ENCODE measurements at regions of chr6 and their contacts with region 1.

Region 1: DNA sequence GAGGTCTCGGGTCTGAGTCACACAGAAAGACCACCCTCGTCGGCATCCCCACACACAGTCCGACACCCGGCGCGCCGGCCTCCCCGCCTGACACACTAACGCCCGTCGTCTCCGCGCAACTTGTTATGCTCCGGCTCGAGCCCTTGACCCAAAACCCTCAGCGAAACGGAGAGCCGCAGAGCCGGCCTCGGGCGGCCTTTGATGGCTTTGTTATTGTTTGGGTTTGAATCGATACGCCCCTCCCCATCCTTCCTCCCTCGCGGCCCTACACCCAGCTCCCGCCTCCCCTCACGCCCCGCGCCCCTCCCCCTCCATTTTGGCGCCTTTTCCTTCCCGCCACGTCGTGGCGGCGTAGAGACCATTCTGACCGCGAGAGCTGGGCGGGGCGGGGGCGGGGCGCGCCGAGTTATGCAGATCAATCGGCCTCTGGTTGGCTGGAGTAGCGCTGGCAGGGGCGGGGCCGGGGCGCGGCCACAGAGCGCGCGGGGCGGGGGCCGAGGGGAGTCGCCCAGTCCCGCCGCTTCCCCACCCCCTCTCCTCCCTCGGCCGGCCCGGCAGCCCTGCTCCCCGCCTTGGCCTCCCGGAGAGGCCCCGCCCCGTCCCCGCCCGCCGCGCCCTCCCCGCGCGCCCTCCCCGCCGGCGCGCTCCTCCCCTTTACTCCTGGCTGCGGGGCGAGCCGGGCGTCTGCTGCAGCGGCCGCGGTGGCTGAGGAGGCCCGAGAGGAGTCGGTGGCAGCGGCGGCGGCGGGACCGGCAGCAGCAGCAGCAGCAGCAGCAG is at the start of gene PIM1:
- DNase-seq: peak; percentile 99
- H3K4me3 ChIP-seq: peak within 1 kb of the TSS; percentile 54 to 60
- H3K27ac ChIP-seq: peak within 1 kb of the TSS; percentile 84 to 90
- H3K4me1 ChIP-seq: peaks cover 5% of the 10 kb centered on the region
- H3K27me3 ChIP-seq: no peaks in the 10 kb centered on the region
- CTCF ChIP-seq: peak in 1 of 4 experiments; percentile 12
- POLR2A ChIP-seq: peak; percentile 96
- total RNA-seq, gene PIM1: 4.8 to 35.3 TPM

Region 2: GRCh38 chr6:36985808-36986703 is 183.6 kb before region 1 on chr6 and contains the start of gene MTCH1:
- intact Hi-C with region 1: loop called (anchors 5 kb)
- DNase-seq: peak; percentile 85
- H3K4me3 ChIP-seq: peak within 1 kb of the TSS; percentile 99 to 100
- H3K27ac ChIP-seq: peak within 1 kb of the TSS; percentile 97 to 98
- H3K4me1 ChIP-seq: peaks cover 4% of the 10 kb centered on the region
- H3K27me3 ChIP-seq: no peaks in the 10 kb centered on the region
- CTCF ChIP-seq: peak in 1 of 4 experiments; percentile 3
- POLR2A ChIP-seq: peak; percentile 99
- total RNA-seq, gene MTCH1: 269 to 367 TPM

Region 3: DNA sequence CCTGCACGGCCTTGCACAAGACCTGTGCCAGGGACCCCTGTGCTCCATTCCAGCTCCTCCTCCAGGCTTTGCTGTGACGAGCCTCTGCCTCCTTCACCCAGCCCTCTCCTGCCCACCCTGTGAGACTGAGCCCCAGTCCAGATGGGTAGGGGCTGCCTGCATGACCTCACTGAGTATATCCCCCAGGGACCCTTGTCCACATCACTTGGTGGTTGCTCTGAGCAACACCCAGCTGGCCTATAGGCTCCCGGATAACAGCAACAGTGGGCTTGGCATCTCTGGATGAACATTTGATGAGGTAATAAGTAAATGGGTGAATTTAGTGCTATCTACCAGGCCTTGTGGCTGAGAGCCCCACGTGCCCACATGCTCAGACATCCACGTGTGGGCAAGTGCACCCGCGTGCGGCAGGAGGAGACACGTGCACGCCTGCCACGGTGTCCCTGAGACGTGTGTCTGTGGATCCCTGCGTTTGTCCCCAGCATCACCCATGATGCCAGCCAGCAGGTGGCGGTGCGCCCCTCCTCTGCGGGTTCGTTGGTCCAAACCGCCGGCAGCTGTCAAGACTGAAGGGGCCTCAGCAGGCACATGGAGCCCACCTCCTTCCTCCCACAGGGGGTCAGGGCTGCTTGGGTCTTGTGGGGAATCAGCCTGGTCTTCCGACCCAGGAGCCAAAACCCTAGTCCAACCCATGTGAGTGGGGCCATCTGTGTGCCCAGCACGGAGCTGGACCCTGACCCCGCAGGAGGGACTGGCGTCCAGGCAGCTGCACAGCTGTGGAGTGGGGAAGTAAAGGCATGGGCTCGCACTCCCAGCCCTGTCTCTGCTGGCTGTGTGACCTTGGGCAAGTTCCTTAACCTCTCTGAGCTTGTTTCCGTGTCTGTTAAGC is 118.3 kb before region 1 on chr6:
- intact Hi-C with region 1: loop called (anchors 2 kb)
- DNase-seq: peak; percentile 86
- H3K4me3 ChIP-seq: no peak overlapping the region
- H3K27ac ChIP-seq: no peak overlapping the region
- H3K4me1 ChIP-seq: no peaks in the 10 kb centered on the region
- H3K27me3 ChIP-seq: no peaks in the 10 kb centered on the region
- CTCF ChIP-seq: peak; percentile 93 to 98 (median 96)
- POLR2A ChIP-seq: no peak

Region 4: DNA sequence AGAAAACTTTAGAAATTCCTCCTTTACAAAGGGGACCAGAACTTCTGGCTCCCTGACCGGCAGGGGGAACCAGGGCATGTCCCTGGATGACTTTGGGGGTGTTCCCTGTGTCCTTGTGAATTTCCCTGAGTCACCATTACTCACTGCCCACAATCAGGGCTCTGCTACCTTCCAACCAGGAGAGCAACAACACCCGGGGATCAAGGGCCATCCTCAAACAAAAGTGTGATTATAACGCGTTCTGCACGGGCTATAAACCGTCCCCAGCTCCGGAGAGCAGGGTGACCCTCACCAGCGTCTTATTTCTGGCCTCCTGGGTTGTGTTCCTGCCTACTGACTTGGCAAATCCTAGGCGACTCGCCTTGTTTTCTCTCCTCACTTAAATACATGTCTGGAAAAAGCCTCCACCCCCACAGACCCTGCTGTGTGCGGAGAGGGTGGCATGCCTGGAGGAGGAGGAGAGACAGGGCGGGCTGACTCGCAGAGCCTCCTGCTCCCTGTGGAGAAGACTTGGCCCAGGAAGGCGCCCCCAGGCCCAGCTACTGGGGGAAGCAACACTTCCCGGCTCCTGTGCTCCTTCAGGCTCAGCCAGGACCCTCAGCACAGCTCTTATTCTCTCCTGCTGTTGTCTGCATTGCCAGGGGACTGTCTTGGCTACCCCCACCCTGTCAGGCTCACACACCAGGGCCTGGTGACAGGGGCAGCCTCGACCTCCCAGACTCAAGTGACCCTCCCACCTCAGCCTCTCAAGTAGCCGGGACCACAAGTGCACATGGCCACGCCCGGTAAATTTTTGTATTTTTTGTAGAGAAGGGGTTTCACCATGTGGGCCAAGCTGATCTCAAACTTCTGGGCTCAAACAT is 110.1 kb before region 1 on chr6:
- intact Hi-C with region 1: loop called (anchors 2 kb)
- DNase-seq: peak; percentile 37
- H3K4me3 ChIP-seq: no peak overlapping the region
- H3K27ac ChIP-seq: peak overlapping the region; percentile 45 to 76
- H3K4me1 ChIP-seq: no peaks in the 10 kb centered on the region
- H3K27me3 ChIP-seq: no peaks in the 10 kb centered on the region
- CTCF ChIP-seq: peak in 3 of 4 experiments; percentile 22 to 69 (median 48)
- POLR2A ChIP-seq: no peak

Region 5: DNA sequence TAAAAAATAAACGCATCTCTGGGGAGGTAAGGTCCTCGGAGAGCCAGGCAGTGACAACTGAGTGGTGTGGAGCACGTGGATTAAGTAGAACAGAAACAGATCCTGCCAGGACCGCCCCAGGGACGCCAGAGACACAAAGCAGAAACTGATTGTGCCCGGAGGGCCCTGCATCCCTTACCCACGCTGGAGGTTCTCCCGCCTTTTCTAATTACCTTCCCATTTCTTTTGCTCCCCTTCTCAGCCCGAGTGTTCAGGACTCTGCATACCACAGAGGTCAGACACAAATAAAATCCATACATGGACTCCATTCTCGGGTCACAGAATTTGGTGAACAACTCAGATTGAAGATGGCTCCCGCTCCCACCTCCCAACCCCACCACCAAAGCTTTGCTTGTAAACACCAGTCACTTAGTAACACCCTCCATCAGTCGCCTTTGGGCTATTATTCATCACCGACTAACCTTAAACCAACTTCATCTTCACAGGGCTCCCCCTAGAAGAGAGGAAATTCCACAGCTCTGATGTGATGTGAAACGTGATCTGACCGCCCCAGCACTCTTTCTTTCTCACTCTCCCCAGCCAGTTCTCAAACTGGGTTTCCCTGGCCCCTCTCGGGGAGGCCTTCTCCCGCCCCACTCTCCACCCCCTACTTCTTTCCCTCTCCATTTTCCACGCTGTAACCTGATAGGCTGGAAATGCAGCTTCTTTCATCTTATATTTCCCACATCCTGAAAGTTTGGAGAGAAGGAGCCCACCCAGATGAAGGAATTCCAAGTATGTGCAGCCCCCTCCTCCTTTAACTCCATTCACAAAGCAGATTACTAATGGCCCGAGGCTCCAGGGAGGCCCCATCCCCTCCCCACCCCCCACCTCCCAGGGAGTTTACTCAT is 32.2 kb before region 1 on chr6:
- intact Hi-C with region 1: loop called (anchors 2 kb)
- DNase-seq: no peak
- H3K4me3 ChIP-seq: no peak overlapping the region
- H3K27ac ChIP-seq: peak overlapping the region; percentile 18 to 32
- H3K4me1 ChIP-seq: no peaks in the 10 kb centered on the region
- H3K27me3 ChIP-seq: no peaks in the 10 kb centered on the region
- CTCF ChIP-seq: no peak
- POLR2A ChIP-seq: no peak